ENCODE measurements at regions of chr5 and their contacts with region 1.

Region 1: GRCh38 chr5:180291943-180292831 is at the start of gene MAPK9:
- DNase-seq: no peak
- H3K4me3 ChIP-seq: peak within 1 kb of the TSS; percentile 78
- H3K27ac ChIP-seq: no peak within 1 kb of the TSS
- H3K27me3 ChIP-seq: no peaks in the 10 kb centered on the region
- CTCF ChIP-seq: no peak
- polyA plus RNA-seq, gene MAPK9: 31.1 and 35.1 TPM in 2 replicates

Region 2: DNA sequence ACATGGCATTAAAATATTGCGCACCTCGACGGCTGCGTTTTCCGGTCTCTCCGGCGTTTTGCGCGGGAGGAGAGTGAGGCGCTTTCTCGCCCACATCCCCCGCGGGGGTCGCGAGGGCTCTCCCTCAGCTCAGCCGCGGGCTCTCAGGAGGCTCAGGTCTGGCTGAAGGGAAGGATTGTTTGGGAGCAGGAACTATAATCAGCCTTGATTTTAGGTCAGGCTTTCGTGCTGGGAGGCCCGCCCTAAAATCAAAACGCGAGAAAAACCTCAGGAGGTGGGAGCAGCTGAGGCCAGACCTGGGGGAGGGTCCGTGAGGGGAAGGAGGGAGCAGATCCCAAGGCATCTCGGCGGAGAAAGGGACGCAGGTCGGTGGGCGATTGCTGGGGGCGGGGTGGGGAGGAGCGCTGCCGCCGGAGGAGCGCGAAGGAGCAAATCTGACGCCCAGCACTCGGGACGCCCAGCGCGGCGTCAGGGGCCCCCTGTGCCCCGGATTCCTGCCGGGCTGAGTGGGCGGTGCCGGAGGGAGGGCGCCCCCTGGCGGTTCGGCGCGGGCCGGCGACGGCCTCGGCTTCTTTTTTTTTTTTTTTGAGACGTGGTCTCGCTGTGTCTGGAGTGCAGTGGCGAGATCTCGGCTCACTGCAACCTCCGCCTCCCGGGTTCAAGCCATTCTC is 202.0 kb before region 1 on chr5:
- CTCF ChIA-PET with region 1: interaction called, 15 read pairs
- POLR2A ChIA-PET with region 1: no interaction called
- DNase-seq: peak; percentile 20
- H3K4me3 ChIP-seq: peak overlapping the region; percentile 65
- H3K27ac ChIP-seq: peak overlapping the region; percentile 65
- H3K27me3 ChIP-seq: no peaks in the 10 kb centered on the region
- CTCF ChIP-seq: peak; percentile 79

Region 3: DNA sequence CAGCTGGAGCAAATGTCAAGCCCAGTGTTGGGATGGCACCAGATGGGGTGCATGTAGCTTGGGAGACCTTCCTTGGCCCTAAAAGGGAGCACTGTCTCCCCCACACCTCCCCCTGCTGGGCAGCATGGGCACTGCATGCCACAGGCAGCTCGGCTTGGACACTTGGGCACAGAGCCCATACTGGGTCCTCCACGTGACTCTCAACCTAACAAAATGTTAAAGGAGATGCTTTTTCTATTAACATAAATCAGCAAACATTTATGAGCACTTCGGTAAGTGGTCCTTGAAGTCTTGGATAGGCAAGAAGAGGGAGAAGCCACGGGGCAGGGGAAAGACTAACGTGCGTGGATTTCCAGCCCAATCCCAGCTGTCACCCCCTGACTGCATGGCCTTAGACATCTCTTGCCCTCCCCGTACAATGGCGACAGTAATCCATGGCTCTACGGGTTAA is 23.6 kb after region 1 on chr5:
- CTCF ChIA-PET with region 1: interaction called, 55 read pairs
- POLR2A ChIA-PET with region 1: no interaction called
- DNase-seq: no peak
- H3K4me3 ChIP-seq: no peak overlapping the region
- H3K27ac ChIP-seq: no peak overlapping the region
- H3K27me3 ChIP-seq: no peaks in the 10 kb centered on the region
- CTCF ChIP-seq: peak; percentile 96

Region 4: DNA sequence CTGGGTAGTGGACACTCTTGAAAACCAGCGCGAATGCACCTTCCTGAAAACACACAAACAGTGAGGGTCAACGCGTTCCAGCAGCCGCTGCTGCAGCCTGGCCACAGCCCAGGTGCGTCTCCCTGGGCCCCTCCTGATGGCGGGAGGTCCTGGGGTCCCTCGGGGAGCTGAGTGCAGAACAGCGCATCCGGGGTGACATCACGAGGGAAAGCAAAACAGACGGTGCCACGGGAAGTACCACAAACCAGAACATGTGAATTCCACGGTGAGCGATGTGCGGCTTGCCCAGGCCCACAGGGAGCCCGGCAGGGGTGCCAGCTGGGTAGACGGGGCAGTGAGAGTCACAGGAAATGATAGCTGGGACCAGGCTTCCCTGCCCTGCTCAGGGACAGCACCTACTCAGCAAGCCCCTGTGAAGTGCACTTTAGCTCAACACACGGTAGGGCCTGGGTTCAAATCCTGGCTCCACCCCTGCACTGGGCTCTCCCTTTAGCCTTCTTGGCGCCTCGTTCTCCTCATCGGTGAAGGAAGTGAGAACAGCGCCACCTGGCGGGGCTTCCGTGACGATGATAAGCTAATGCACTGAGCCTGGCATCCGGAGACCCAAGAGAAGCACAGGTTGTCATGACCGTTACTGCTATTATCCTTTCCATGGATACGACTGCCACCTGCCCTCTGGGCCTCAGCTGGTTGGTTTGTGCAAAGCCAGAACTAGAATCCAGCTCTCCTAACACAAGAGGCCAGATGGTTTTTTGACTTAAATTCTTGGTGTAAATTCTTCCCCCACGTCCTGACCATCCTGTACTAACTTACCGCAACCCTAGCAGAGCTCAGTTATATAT is 36.3 kb after region 1 on chr5:
- CTCF ChIA-PET with region 1: interaction called, 48 read pairs
- POLR2A ChIA-PET with region 1: no interaction called
- DNase-seq: no peak
- H3K4me3 ChIP-seq: no peak overlapping the region
- H3K27ac ChIP-seq: peak overlapping the region; percentile 21
- H3K27me3 ChIP-seq: no peaks in the 10 kb centered on the region
- CTCF ChIP-seq: peak; percentile 72

Region 5: DNA sequence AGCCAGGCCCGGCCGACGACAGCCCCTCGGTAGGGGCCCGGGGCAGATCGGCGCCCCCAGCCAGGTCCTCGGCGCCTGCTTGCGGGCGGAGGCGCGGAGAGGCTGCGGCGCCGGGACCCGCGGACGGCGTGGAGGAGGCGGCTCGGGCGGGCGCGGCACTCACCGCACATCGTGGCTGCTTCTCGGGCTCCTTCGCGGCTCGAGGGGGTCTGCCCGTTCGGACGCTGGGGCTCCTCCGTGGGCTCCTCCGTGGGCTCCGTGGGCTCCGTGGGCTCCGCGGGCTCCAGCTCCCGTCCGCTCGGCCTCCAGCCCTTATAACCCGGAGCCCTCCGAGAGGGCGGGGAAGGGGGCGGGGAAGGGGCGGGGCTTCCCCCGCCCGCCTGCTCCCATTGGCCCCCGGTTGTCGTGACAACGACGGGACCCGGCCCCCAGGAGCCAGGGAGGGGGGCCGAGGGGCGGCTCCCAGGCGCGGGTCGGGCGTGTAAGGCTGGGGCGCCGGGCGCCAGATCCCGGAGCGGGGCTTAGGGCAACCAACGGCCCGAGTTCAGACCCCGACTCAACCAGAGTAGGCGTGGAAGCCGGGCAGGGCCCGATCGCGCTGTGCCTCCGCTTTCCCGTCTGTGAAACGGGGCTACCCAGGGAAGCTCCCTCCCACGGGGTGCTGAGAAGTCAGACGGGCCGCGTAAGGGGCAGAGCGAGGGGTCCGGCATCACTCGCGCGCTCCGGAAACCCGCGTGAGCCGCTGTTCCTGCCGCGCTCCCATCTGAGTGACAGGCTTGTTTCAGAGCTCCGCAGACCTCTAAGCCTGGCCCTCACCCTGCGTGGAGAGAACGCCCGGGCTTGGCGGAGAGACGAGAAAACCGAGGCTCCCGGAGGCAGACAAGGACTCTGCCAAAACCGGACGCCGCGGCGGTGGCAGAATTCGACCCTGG is 61.1 kb after region 1 on chr5 and contains the start of gene GFPT2:
- CTCF ChIA-PET with region 1: interaction called, 11 read pairs
- POLR2A ChIA-PET with region 1: no interaction called
- DNase-seq: peak; percentile 27
- H3K4me3 ChIP-seq: peak within 1 kb of the TSS; percentile 77
- H3K27ac ChIP-seq: no peak within 1 kb of the TSS
- H3K27me3 ChIP-seq: peaks cover 7% of the 10 kb centered on the region
- CTCF ChIP-seq: no peak
- polyA plus RNA-seq, gene GFPT2: 13.9 and 15.1 TPM in 2 replicates

Region 6: DNA sequence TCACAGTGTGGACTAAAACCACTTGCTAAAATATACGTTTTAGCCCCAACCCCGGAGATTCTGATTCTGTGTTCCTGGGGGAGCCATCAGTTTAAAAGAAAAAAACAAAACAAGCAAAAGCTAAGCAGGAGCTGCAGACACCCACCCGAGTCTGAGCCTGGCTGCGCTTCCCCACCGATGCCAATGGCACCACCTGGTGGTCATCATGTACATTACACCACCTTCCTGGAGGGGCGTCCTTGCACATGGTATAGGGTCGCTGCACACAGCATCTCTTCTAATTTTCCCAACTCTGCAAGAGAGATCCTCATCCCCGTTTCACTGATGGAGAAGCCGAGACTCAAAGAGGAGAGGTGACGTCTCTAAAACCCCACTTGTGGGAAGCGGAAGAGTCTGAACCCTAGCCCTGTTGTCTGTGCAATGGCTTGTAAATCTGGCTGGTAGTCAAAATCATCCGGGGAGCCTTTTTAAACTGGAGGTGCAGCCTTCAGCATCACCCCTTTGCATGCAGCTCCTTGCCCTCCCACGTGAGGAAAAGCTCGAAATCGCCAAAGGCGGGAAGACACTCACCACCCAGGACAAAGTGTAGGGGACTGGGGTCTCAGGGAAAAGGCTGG is 178.9 kb after region 1 on chr5:
- CTCF ChIA-PET with region 1: interaction called, 160 read pairs
- POLR2A ChIA-PET with region 1: no interaction called
- DNase-seq: peak; percentile 45
- H3K4me3 ChIP-seq: no peak overlapping the region
- H3K27ac ChIP-seq: no peak overlapping the region
- H3K27me3 ChIP-seq: peaks cover 15% of the 10 kb centered on the region
- CTCF ChIP-seq: peak; percentile 92